Mammary epithelial cell (primary cell): ENCODE measurements at regions of chr3 and their contacts with region 1.

Region 1: DNA sequence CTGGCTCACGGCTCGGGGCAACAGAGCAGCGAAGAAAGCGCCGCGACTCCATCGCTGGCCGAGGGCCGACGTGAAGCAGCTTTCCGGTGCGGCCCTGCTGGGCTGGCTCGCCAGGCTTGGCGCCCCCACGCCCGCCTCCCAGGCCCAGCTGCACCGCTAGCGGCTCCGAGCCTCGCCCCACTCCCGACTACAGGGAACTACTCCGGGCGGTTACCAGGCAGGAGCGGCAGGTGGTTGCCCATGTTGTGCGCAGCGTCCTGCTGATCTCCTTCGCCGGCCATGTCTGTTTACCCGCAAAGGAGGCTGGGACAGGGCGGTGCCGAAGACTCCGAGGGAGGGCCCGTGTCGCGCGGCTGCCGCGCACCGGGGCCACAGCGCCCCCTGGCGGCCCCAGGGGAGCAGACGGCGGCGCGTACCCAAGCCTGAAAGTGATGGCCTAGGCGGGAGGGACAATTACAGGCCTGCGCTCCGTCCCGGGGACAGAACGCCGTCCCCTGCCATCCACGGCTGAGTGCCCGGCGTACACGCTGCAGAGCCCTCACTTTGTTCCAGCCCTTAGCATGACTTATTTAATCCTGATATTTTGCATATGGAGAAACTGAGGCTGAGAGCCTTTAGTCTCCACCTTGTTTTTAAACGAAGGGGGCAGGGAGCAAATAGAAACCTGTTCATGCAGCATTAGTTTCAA is at the start of gene CRBN:
- DNase-seq: peak; percentile 78
- H3K4me3 ChIP-seq: peak within 1 kb of the TSS; percentile 83 to 99 (median 85)
- H3K27ac ChIP-seq: peak within 1 kb of the TSS; percentile 70
- H3K4me1 ChIP-seq: peaks cover 8% of the 10 kb centered on the region
- H3K27me3 ChIP-seq: no peaks in the 10 kb centered on the region
- CTCF ChIP-seq: peak; percentile 86 to 99
- total RNA-seq, gene CRBN: 25.9 to 40.0 TPM

Region 2: DNA sequence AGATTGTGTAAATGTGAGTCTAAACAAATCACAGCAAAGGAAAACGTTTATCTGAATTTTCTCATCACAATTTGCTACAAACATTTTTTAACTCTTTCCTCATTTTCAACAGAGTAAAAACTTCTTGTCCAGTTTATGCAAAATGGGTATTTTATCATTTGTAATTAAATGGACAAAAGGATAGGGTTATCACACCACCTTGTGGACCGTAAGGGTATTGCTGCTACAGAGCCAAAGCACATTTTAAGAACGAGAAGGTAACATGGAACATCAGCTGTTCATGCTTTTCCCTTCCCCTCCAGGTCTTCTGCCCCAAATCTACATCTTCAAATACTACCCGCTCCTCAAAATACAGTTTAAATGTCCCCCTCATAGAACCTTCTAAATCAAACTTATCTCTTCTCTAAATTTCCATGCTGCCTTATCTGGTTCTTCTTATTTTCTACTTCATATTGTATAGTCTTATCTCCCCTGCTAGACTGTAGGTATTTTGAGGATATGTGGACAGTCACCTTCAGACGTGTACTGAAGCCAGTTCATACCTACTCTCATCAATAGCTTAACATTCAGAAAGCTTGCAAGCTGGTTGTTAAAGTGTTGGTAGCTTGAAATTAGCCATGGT is 1110.8 kb after region 1 on chr3:
- CTCF ChIA-PET with region 1: no interaction called
- dilution Hi-C with region 1: loop called (anchors 25 kb)
- in situ Hi-C with region 1: loop called in 1 of 2 experiments (anchors 25 kb)
- intact Hi-C with region 1: no loop called
- DNase-seq: peak; percentile 25
- H3K4me3 ChIP-seq: no peak overlapping the region
- H3K27ac ChIP-seq: no peak overlapping the region
- H3K4me1 ChIP-seq: no peaks in the 10 kb centered on the region
- H3K27me3 ChIP-seq: no peaks in the 10 kb centered on the region
- CTCF ChIP-seq: peak; percentile 88 to 92